CD8-positive, alpha-beta T cell (primary cell): ENCODE measurements at regions of chr22 and their contacts with region 1.

Region 1: DNA sequence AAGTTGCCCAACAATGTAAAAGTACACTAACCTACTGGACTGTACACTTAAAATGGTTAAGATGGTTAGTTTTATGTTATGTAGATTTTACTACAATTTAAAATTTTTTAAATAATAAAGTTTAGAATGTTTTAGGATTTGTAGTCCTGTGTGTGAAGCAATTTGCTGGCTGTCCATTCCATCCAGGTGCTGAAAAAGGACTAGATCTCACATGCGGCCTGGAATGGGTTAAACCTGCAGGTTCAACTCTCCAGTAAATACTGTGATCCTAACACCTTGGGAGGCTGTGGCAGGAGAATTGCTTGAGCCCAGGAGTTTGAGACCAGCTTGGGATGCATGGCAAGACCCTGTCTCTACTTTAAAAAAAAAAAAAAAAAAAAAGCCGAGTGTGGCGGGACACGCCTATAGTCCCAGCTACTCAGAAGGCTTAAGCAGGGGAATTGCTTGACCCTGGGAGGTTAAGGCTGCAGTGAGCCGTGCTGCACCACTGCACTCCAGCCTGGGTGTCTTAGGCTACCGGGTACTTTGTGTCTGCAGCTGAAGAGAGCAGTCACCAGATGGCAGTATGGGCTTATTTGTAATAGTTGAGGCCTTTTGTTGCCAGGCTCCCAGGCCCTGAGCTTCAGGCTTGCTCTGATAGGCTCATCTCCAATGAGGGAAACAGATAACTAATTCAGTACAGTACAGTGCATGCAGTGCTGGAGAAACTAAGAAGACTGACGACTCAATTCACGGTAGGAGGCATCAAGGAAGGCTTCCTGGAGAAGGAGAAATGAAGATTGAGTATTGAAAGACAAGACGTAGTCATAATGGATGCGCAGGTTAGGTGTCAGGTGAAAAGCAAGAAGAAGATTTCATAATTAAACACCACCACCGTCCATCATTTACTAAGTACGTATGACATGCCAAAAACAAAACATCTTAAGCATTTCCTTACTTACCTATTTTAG is 64.7 kb upstream of the ASPHD2 start:
- DNase-seq: peak; percentile 1 to 78 (median 50)
- ATAC-seq: peak; percentile 73
- H3K4me3 ChIP-seq: no peak overlapping the region
- H3K4me3 Mint-ChIP-seq: no peak overlapping the region
- H3K27ac ChIP-seq: no peak overlapping the region
- H3K27ac Mint-ChIP-seq: no peak overlapping the region
- H3K4me1 ChIP-seq: peaks cover 7% of the 10 kb centered on the region
- H3K4me1 Mint-ChIP-seq: peaks cover 8% of the 10 kb centered on the region
- H3K27me3 ChIP-seq: peaks cover 0 to 4% of the 10 kb centered on the region in 2 experiments
- H3K27me3 Mint-ChIP-seq: peaks cover 20% of the 10 kb centered on the region
- CTCF ChIP-seq: peak; percentile 58

Region 2: GRCh38 chr22:24516301-24516737 is 1848.0 kb before region 1 on chr22:
- CTCF ChIA-PET with region 1: no interaction called
- POLR2A ChIA-PET with region 1: no interaction called
- intact Hi-C with region 1: no loop called
- DNase-seq: peak in 1 of 9 experiments; percentile 22
- ATAC-seq: no peak
- H3K4me3 ChIP-seq: no peak overlapping the region
- H3K4me3 Mint-ChIP-seq: no peak overlapping the region
- H3K27ac ChIP-seq: no peak overlapping the region
- H3K27ac Mint-ChIP-seq: no peak overlapping the region
- H3K4me1 ChIP-seq: no peaks in the 10 kb centered on the region
- H3K4me1 Mint-ChIP-seq: peaks cover under 1% of the 10 kb centered on the region
- H3K27me3 ChIP-seq: no peaks in the 10 kb centered on the region
- H3K27me3 Mint-ChIP-seq: no peaks in the 10 kb centered on the region
- CTCF ChIP-seq: no peak

Region 3: DNA sequence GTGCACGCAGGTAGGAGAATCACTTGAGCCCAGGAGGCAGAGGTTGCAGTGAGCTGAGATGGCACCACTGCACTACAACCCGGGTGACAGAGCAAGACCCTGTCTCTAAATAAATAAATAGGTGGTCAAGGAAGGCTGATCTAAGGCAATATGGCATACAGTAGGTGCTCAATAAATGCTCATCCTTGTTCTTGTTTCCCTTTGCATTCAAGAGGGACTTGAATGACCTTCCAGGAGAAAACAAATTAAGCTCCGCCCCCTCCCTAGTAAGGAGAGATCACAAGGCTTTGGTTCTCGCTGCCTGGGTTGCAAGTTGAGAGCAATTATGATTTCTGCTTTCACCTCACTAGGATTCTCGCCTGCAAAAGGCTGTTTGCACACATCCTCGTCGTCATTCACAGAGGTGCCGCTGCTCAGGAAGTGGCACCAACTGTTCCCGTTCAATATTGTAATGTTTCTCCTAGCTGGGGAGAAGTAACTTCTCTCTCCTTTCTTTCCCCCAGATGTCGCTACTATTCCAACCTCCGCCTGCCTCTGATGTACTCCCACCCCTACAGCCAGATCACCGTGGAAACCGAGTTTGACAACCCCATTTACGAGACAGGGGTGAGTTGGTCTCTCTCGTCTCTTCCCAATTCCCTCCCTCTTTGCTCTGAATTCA is 13.0 kb after region 1 on chr22:
- CTCF ChIA-PET with region 1: interaction called, 27 read pairs
- POLR2A ChIA-PET with region 1: no interaction called
- intact Hi-C with region 1: no loop called
- DNase-seq: peak in 1 of 9 experiments; percentile 15
- ATAC-seq: no peak
- H3K4me3 ChIP-seq: no peak overlapping the region
- H3K4me3 Mint-ChIP-seq: no peak overlapping the region
- H3K27ac ChIP-seq: no peak overlapping the region
- H3K27ac Mint-ChIP-seq: no peak overlapping the region
- H3K4me1 ChIP-seq: peaks cover 5% of the 10 kb centered on the region
- H3K4me1 Mint-ChIP-seq: peaks cover 6% of the 10 kb centered on the region
- H3K27me3 ChIP-seq: peaks cover 0 to 3% of the 10 kb centered on the region in 2 experiments
- H3K27me3 Mint-ChIP-seq: peaks cover 42% of the 10 kb centered on the region
- CTCF ChIP-seq: no peak

Region 4: GRCh38 chr22:26461188-26461810 is 97.0 kb after region 1 on chr22:
- CTCF ChIA-PET with region 1: interaction called, 76 read pairs
- POLR2A ChIA-PET with region 1: no interaction called
- intact Hi-C with region 1: loop called (anchors 1 kb)
- DNase-seq: peak in 7 of 9 experiments; percentile 16 to 56 (median 50)
- ATAC-seq: no peak
- H3K4me3 ChIP-seq: no peak overlapping the region
- H3K4me3 Mint-ChIP-seq: no peak overlapping the region
- H3K27ac ChIP-seq: no peak overlapping the region
- H3K27ac Mint-ChIP-seq: no peak overlapping the region
- H3K4me1 ChIP-seq: no peaks in the 10 kb centered on the region
- H3K4me1 Mint-ChIP-seq: peaks cover 6% of the 10 kb centered on the region
- H3K27me3 ChIP-seq: no peaks in the 10 kb centered on the region
- H3K27me3 Mint-ChIP-seq: no peaks in the 10 kb centered on the region
- CTCF ChIP-seq: peak; percentile 75

Region 5: DNA sequence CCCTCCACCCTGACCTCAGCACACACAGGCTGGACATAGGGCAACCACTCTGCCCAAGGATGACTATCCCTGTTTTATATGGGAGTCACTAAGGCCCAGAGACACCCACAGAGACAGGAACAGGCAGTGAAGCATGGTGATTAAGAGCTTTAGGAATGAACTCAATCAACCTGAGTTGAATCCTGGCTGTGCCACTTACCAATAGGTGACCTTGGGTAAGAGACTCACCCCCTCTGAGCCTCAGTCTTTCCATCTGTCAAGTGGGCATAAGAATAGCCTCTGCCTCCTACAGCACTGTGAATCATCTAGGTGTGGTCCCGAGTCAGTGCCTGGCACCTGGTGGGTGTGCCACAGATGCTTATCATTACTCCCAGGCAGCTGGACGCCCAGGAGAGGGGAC is 246.7 kb after region 1 on chr22:
- CTCF ChIA-PET with region 1: no interaction called
- POLR2A ChIA-PET with region 1: no interaction called
- intact Hi-C with region 1: no loop called
- DNase-seq: no peak
- ATAC-seq: no peak
- H3K4me3 ChIP-seq: no peak overlapping the region
- H3K4me3 Mint-ChIP-seq: no peak overlapping the region
- H3K27ac ChIP-seq: no peak overlapping the region
- H3K27ac Mint-ChIP-seq: no peak overlapping the region
- H3K4me1 ChIP-seq: peaks cover 27% of the 10 kb centered on the region
- H3K4me1 Mint-ChIP-seq: peaks cover 24% of the 10 kb centered on the region
- H3K27me3 ChIP-seq: no peaks in the 10 kb centered on the region
- H3K27me3 Mint-ChIP-seq: no peaks in the 10 kb centered on the region
- CTCF ChIP-seq: no peak

Region 6: DNA sequence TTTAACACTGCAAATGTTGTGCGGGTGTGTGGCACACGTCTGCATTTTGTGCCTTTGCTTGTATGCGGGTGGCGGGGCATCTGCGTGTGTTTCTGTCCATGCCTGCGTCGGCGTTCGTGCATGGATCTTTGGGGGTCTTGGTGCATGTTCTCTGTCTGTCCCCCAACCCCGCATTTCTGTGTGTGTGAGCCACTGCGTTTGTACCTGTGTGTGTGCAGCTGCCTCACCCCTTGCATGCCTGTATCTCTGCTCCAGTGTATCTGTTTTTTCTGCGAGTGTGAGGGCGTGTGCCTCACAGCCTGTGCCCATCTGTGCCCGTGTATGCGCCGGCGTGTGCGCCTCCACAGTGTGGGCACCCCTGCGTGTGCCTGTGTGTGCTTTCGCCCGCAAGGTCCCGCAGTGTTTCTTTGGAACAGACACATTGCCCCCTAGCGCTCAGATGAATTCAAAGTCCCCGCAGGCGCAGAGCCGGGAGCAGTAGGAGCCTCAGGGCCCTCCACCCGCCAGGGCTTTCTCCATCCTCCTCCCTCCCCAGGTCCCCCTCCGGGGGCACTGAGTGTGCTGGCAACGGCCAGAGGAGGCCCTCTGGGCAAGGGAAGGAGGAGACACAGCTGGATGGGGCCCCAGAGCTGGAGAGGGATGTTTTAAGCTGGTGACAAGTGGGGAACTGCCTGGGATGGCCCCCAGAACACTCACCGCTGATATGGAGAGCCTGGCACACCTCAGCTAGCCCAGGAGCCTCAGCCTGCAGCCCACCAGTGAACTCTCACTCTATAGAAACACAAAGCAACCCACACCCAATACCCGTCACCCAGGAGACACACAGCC is 1440.3 kb after region 1 on chr22:
- CTCF ChIA-PET with region 1: no interaction called
- POLR2A ChIA-PET with region 1: no interaction called
- intact Hi-C with region 1: loop called in 1 of 2 experiments (anchors 10 kb)
- DNase-seq: peak; percentile 6 to 67 (median 49)
- ATAC-seq: no peak
- H3K4me3 ChIP-seq: no peak overlapping the region
- H3K4me3 Mint-ChIP-seq: no peak overlapping the region
- H3K27ac ChIP-seq: no peak overlapping the region
- H3K27ac Mint-ChIP-seq: no peak overlapping the region
- H3K4me1 ChIP-seq: peaks cover 12% of the 10 kb centered on the region
- H3K4me1 Mint-ChIP-seq: peaks cover 14% of the 10 kb centered on the region
- H3K27me3 ChIP-seq: peaks cover 9 to 12% of the 10 kb centered on the region in 2 experiments
- H3K27me3 Mint-ChIP-seq: peaks cover 18% of the 10 kb centered on the region
- CTCF ChIP-seq: peak; percentile 60